ENCODE measurements at regions of chr2 and their contacts with region 1.

Region 1: DNA sequence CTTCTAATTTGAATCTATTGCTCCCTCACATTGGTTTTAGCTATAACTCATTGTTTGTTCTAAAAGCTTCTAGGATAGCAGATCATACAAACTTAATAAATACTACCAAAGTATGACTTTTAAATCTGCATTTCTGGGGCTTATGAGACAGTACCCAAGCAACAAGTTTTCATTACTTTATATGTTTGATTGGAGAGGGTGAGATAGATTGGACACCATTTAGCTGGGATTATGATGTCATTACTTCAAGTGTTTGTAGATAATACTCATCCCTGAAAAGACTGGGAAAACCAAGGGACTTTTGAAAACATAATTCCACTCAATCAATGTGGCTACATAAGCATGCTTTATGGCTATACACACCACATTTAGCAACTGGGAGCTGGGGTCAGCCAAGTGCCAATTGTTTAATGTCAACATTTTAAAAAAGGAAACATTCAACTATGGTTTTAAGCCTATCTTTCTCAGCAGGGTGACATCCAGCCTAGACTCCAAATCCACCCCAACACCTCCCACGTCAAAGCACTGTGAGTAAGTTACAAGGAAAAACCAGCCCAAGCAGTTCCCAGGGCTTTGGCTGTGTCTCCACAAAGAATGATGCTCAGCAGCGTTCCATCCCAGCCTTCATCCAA is 119.9 kb downstream of the ETAA1 start:
- DNase-seq: no peak
- H3K4me3 ChIP-seq: no peak overlapping the region
- H3K4me3 Mint-ChIP-seq: no peak overlapping the region
- H3K27ac ChIP-seq: no peak overlapping the region
- H3K27ac Mint-ChIP-seq: no peak overlapping the region
- H3K4me1 ChIP-seq: no peaks in the 10 kb centered on the region
- H3K4me1 Mint-ChIP-seq: no peaks in the 10 kb centered on the region
- H3K27me3 ChIP-seq: no peaks in the 10 kb centered on the region
- H3K27me3 Mint-ChIP-seq: no peaks in the 10 kb centered on the region

Region 2: GRCh38 chr2:67532390-67532789 is 15.4 kb after region 1 on chr2:
- CTCF ChIA-PET with region 1: no interaction called
- POLR2A ChIA-PET with region 1: no interaction called
- intact Hi-C with region 1: loop called (anchors 2 kb)
- DNase-seq: no peak
- H3K4me3 ChIP-seq: no peak overlapping the region
- H3K4me3 Mint-ChIP-seq: no peak overlapping the region
- H3K27ac ChIP-seq: no peak overlapping the region
- H3K27ac Mint-ChIP-seq: no peak overlapping the region
- H3K4me1 ChIP-seq: no peaks in the 10 kb centered on the region
- H3K4me1 Mint-ChIP-seq: no peaks in the 10 kb centered on the region
- H3K27me3 ChIP-seq: no peaks in the 10 kb centered on the region
- H3K27me3 Mint-ChIP-seq: no peaks in the 10 kb centered on the region

Region 3: DNA sequence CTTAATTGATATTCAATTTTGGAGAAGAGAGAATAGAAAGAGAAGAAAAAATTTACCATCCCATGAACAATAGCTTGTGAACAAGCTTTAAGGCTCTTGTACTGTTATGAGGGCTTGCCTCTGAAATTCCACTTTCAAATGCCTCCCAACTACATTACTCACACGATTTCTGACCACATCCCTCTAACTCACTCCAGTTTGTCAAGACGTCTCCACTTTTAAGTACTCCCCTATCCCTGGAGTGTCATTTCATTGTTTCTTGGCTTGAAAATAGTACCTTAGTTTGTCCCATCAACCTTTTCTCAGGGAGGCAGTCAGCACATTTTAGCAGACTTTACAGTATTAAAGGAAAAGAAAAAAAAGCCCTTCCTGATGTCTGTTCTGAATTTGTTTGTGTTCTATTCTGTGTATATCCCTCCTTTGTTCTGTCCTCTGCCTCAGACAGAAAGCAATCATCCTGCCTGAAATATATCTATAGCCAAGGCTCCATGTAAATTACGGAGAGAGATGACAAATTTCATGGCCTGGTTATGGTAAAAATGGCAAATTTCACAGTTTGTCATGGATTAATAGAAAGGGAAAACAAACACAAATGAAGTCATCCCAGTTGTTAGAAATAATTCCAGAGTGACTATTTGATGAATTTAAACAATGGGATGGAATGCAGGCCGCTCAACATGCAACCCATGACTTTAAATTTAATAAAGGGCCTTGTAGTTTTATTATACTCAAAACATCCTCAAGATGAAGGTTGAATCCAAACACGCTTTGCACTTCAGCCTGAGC is 108.9 kb after region 1 on chr2:
- CTCF ChIA-PET with region 1: no interaction called
- POLR2A ChIA-PET with region 1: no interaction called
- intact Hi-C with region 1: no loop called
- DNase-seq: no peak
- H3K4me3 ChIP-seq: no peak overlapping the region
- H3K4me3 Mint-ChIP-seq: no peak overlapping the region
- H3K27ac ChIP-seq: no peak overlapping the region
- H3K27ac Mint-ChIP-seq: no peak overlapping the region
- H3K4me1 ChIP-seq: no peaks in the 10 kb centered on the region
- H3K4me1 Mint-ChIP-seq: no peaks in the 10 kb centered on the region
- H3K27me3 ChIP-seq: no peaks in the 10 kb centered on the region
- H3K27me3 Mint-ChIP-seq: peaks cover 0 to 2% of the 10 kb centered on the region in 2 donors

Measured in CD4-positive, alpha-beta memory T cell (primary cell).